B cell (primary cell): ENCODE measurements at regions of chr2 and their contacts with region 1.

Region 1: GRCh38 chr2:225434014-225434413 is 34.5 kb downstream of the NYAP2 start:
- DNase-seq: no peak
- ATAC-seq: no peak
- H3K4me3 ChIP-seq: no peak overlapping the region
- H3K4me3 Mint-ChIP-seq: no peak overlapping the region
- H3K27ac ChIP-seq: no peak overlapping the region
- H3K27ac Mint-ChIP-seq: no peak overlapping the region
- H3K4me1 ChIP-seq: no peaks in the 10 kb centered on the region
- H3K4me1 Mint-ChIP-seq: no peaks in the 10 kb centered on the region
- H3K27me3 ChIP-seq: no peaks in the 10 kb centered on the region
- H3K27me3 Mint-ChIP-seq: peaks cover 4% of the 10 kb centered on the region
- CTCF ChIP-seq: no peak

Region 2: DNA sequence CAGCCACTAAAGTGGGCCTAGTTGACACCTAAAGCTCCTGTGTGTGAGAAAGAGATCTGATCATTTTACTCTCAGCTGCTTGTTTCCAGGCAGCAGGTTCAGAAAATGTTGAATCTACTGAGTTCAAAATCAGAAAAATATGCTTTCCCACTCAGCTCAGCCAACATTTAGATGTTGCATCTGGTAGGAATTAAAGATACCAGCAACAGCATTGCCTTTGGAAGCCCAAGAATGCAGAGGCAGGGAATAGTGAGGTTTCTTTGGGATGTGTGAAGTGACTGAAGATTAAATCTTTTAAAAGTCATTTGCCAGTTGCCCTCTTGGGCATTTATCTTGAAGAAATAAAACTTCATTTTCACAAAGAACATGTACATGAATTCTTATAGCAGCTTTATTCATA is 357.9 kb before region 1 on chr2:
- CTCF ChIA-PET with region 1: no interaction called
- POLR2A ChIA-PET with region 1: interaction called, 10 read pairs
- intact Hi-C with region 1: no loop called
- DNase-seq: no peak
- ATAC-seq: no peak
- H3K4me3 ChIP-seq: no peak overlapping the region
- H3K4me3 Mint-ChIP-seq: no peak overlapping the region
- H3K27ac ChIP-seq: no peak overlapping the region
- H3K27ac Mint-ChIP-seq: no peak overlapping the region
- H3K4me1 ChIP-seq: no peaks in the 10 kb centered on the region
- H3K4me1 Mint-ChIP-seq: no peaks in the 10 kb centered on the region
- H3K27me3 ChIP-seq: no peaks in the 10 kb centered on the region
- H3K27me3 Mint-ChIP-seq: peaks cover 20% of the 10 kb centered on the region
- CTCF ChIP-seq: no peak

Region 3: GRCh38 chr2:225479386-225479785 is 45.4 kb after region 1 on chr2:
- CTCF ChIA-PET with region 1: no interaction called
- POLR2A ChIA-PET with region 1: no interaction called
- intact Hi-C with region 1: no loop called
- DNase-seq: no peak
- ATAC-seq: no peak
- H3K4me3 ChIP-seq: no peak overlapping the region
- H3K4me3 Mint-ChIP-seq: no peak overlapping the region
- H3K27ac ChIP-seq: no peak overlapping the region
- H3K27ac Mint-ChIP-seq: no peak overlapping the region
- H3K4me1 ChIP-seq: no peaks in the 10 kb centered on the region
- H3K4me1 Mint-ChIP-seq: no peaks in the 10 kb centered on the region
- H3K27me3 ChIP-seq: no peaks in the 10 kb centered on the region
- H3K27me3 Mint-ChIP-seq: peaks cover 8% of the 10 kb centered on the region
- CTCF ChIP-seq: no peak

Region 4: DNA sequence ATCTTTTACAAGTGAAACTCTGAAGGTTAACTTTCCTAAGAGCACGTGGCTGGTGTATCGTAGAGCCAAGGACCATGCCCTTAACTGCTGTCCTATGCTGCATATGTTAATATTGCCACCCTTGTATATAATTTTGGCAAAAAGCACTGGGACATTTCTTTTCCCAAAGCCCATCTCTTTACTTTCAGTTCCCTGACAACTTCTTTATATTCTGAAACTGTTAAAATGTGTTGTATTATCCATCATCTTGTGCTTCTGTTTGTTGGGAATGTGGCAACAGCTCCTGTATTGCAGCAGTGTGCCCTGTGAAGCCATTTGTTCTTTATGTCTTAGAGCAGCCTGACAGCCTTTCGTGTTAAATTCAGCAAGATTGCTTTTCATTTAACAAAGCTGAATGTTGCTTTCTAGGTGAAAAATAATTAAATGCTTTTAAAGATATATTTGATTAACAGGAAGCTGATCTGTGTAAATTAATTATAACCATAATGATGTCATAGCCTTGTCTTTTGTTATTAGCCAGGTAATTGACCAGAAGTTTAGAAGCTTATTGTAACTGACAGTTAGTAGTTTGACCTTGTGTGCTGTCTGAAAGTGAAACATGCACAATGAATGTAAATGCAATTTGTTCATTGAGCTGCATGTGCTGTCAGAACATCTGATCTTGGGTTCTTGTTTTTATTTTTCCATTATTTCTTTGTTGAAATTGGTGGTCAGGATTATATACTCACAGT is 1411.5 kb after region 1 on chr2:
- CTCF ChIA-PET with region 1: no interaction called
- POLR2A ChIA-PET with region 1: no interaction called
- intact Hi-C with region 1: no loop called
- DNase-seq: no peak
- ATAC-seq: no peak
- H3K4me3 ChIP-seq: no peak overlapping the region
- H3K4me3 Mint-ChIP-seq: no peak overlapping the region
- H3K27ac ChIP-seq: no peak overlapping the region
- H3K27ac Mint-ChIP-seq: peak overlapping the region; percentile 26
- H3K4me1 ChIP-seq: peaks cover 43 to 59% of the 10 kb centered on the region in 2 donors
- H3K4me1 Mint-ChIP-seq: peaks cover 62% of the 10 kb centered on the region
- H3K27me3 ChIP-seq: no peaks in the 10 kb centered on the region
- H3K27me3 Mint-ChIP-seq: no peaks in the 10 kb centered on the region
- CTCF ChIP-seq: no peak